Right ventricle myocardium inferior (tissue), 1 donor: ENCODE measurements at regions of chr2 and their contacts with region 1.

Region 1: GRCh38 chr2:45643543-45644542 is 7.6 kb upstream of the PRKCE start:
- DNase-seq: peak; percentile 88
- ATAC-seq: peak; percentile 95

Region 2: DNA sequence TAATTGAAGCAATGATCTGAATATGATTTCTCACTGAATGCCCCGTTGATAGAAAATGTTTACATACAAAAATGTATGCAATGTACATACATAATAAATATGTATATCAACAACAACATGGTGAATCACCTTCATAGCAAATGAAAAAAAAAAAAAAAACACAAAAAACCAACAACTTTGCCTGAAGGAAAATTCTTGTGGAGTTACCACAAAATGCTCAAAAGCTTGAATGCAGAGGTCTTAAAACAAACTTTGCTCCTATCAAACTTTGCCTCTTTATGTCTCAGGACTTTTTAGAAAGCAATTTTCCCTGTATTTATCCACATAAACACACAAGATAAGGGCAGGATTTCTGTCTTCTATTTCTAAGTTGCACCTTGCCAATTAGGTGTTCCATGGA is 541.7 kb before region 1 on chr2:
- intact Hi-C with region 1: no loop called
- DNase-seq: no peak
- ATAC-seq: no peak

Region 3: DNA sequence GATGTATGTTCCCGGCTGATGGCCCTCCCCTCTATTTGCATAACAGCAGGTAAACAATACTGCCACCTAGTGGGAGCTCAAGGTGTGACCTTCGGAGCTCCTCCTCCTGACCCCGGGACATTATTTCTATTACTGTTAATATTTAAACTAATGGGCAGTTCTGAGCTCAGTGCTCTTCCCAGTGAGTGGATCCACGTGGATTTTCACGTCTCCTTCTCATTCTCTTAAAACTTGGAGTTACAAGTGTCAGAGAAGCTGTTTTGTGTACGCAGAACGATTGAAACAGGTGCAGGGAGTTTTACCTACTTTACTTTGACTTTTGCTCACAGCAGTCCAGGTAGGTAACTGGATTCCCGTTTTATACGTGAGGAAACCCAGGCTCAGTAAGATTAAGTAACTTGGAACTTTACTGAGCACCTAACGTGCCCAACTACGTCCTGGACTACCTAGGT is 134.9 kb after region 1 on chr2:
- intact Hi-C with region 1: loop called (anchors 1 kb)
- DNase-seq: no peak
- ATAC-seq: peak; percentile 66